ENCODE measurements at regions of chr1 and their contacts with region 1.

Region 1: GRCh38 chr1:152047730-152048402 is 11.1 kb upstream of the S100A11 start:
- DNase-seq: peak; percentile 94 to 96
- H3K4me3 ChIP-seq: peak overlapping the region; percentile 52; the same call in 1 of the 2 replicates
- H3K27ac ChIP-seq: peak overlapping the region; percentile 99
- H3K4me1 ChIP-seq: peaks cover 72% of the 10 kb centered on the region
- H3K27me3 ChIP-seq: no peaks in the 10 kb centered on the region
- CTCF ChIP-seq: peak; percentile 51; the same call in 1 of the 2 replicates

Region 2: GRCh38 chr1:151853411-151853943 is 194.4 kb before region 1 on chr1 and contains the start of gene THEM5:
- CTCF ChIA-PET with region 1: no interaction called
- POLR2A ChIA-PET with region 1: interaction called, 15 read pairs
- intact Hi-C with region 1: no loop called
- DNase-seq: no peak
- H3K4me3 ChIP-seq: no peak within 1 kb of the TSS
- H3K27ac ChIP-seq: no peak within 1 kb of the TSS
- H3K4me1 ChIP-seq: no peaks in the 10 kb centered on the region
- H3K27me3 ChIP-seq: no peaks in the 10 kb centered on the region
- CTCF ChIP-seq: no peak
- total RNA-seq, gene THEM5: not detected in 2 replicates

Region 3: GRCh38 chr1:151924679-151925587 is 122.9 kb before region 1 on chr1:
- CTCF ChIA-PET with region 1: no interaction called
- POLR2A ChIA-PET with region 1: no interaction called
- intact Hi-C with region 1: loop called (anchors 1 kb)
- DNase-seq: peak; percentile 34 to 90
- H3K4me3 ChIP-seq: no peak overlapping the region
- H3K27ac ChIP-seq: peak overlapping the region; percentile 47
- H3K4me1 ChIP-seq: peaks cover 51% of the 10 kb centered on the region
- H3K27me3 ChIP-seq: no peaks in the 10 kb centered on the region
- CTCF ChIP-seq: no peak

Region 4: GRCh38 chr1:151935154-151935553 is 112.7 kb before region 1 on chr1:
- CTCF ChIA-PET with region 1: no interaction called
- POLR2A ChIA-PET with region 1: no interaction called
- intact Hi-C with region 1: no loop called
- DNase-seq: no peak
- H3K4me3 ChIP-seq: no peak overlapping the region
- H3K27ac ChIP-seq: no peak overlapping the region
- H3K4me1 ChIP-seq: peaks cover 13% of the 10 kb centered on the region
- H3K27me3 ChIP-seq: no peaks in the 10 kb centered on the region
- CTCF ChIP-seq: no peak

Region 5: GRCh38 chr1:151993654-151994496 is 54.0 kb before region 1 on chr1 and contains the start of gene S100A10:
- CTCF ChIA-PET with region 1: interaction called, 3 read pairs
- POLR2A ChIA-PET with region 1: interaction called, 15 read pairs
- intact Hi-C with region 1: loop called (anchors 1 kb)
- DNase-seq: peak; percentile 92
- H3K4me3 ChIP-seq: peak within 1 kb of the TSS; percentile 94
- H3K27ac ChIP-seq: peak within 1 kb of the TSS; percentile 99
- H3K4me1 ChIP-seq: peaks cover 77% of the 10 kb centered on the region
- H3K27me3 ChIP-seq: no peaks in the 10 kb centered on the region
- CTCF ChIP-seq: no peak
- total RNA-seq, gene S100A10: 966 and 1,436 TPM in 2 replicates

Region 6: DNA sequence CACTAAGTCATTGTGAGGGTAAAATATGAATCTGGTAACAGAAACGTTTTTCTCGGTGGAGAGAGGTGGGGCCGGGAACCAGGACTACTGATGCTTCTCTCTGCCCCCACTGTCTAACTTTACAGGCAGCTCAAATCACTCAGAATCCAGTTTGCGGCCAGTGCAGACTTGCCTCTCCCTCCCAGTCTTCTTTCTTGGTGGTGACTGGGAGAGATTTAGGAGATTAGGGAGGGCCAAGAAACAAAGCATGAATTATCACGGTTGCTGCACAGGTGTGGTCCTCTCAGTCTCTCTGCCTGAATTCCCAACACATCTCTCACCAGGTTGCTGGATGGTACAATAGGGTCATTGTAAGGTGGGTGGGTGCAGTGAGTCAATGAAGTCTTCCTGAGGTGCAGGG is 23.7 kb before region 1 on chr1:
- CTCF ChIA-PET with region 1: interaction called, 3 read pairs
- POLR2A ChIA-PET with region 1: interaction called, 5 read pairs
- intact Hi-C with region 1: loop called (anchors 1 kb)
- DNase-seq: peak; percentile 73 to 96
- H3K4me3 ChIP-seq: peak overlapping the region; percentile 11; the same call in 1 of the 2 replicates
- H3K27ac ChIP-seq: peak overlapping the region; percentile 94
- H3K4me1 ChIP-seq: peaks cover 63% of the 10 kb centered on the region
- H3K27me3 ChIP-seq: no peaks in the 10 kb centered on the region
- CTCF ChIP-seq: no peak

Region 7: DNA sequence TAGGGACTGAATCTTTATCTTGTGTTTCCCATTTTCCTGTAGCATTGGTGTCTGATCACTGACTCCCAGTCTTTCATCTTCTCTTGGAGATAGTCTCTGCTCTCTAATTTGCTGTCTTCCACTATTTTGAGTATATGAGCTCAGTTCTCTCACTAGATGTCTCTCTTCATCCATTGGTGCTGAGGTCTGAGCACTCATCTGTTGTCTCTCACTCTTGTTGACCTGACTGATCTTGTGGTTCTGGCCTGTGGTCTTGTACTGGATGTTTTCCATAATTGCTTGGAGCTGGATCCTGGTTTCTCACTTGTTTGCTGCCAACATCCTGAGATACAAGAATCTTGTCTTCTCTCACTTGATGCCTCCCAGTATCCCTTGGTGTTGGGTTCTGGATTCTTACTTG is 14.1 kb after region 1 on chr1:
- CTCF ChIA-PET with region 1: no interaction called
- POLR2A ChIA-PET with region 1: no interaction called
- intact Hi-C with region 1: no loop called
- DNase-seq: no peak
- H3K4me3 ChIP-seq: no peak overlapping the region
- H3K27ac ChIP-seq: no peak overlapping the region
- H3K4me1 ChIP-seq: no peaks in the 10 kb centered on the region
- H3K27me3 ChIP-seq: peaks cover 41% of the 10 kb centered on the region
- CTCF ChIP-seq: no peak

Region 8: DNA sequence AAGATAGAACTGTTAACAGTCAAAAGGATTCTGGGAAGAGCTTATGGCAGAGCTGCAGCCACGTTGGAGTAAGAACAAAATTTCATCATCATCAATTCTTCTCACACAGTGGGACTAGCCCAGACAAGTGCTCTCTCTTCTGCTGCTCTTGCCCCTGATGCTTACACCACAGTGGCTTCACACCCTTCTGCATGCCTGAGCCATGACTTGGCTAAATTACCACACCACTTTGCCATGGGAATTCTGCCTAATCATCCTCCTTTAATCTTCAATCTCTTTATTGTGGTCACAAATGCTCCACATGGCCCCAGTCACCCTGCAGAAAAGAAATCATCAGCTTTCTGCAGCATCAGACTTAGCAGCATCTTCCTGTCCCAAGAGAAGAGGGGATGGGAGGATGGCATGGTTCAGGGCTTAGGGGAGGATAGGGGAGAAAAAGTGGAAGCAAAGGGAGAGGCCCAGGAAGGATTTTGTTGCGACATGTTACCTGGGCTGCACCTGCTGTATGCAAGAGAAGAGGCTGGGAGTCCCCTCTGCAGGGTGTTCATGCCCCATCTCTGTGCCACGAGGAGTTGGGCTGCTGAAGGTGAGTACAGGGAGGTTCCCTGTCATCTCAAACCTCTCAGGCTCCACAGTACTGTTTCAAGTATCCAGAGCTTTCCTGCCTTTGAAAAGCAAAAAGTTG is 120.1 kb after region 1 on chr1:
- CTCF ChIA-PET with region 1: no interaction called
- POLR2A ChIA-PET with region 1: interaction called, 8 read pairs
- intact Hi-C with region 1: loop called (anchors 2 kb)
- DNase-seq: peak; percentile 82 to 96
- H3K4me3 ChIP-seq: no peak overlapping the region
- H3K27ac ChIP-seq: peak overlapping the region; percentile 73
- H3K4me1 ChIP-seq: peaks cover 70% of the 10 kb centered on the region
- H3K27me3 ChIP-seq: no peaks in the 10 kb centered on the region
- CTCF ChIP-seq: no peak

Region 9: DNA sequence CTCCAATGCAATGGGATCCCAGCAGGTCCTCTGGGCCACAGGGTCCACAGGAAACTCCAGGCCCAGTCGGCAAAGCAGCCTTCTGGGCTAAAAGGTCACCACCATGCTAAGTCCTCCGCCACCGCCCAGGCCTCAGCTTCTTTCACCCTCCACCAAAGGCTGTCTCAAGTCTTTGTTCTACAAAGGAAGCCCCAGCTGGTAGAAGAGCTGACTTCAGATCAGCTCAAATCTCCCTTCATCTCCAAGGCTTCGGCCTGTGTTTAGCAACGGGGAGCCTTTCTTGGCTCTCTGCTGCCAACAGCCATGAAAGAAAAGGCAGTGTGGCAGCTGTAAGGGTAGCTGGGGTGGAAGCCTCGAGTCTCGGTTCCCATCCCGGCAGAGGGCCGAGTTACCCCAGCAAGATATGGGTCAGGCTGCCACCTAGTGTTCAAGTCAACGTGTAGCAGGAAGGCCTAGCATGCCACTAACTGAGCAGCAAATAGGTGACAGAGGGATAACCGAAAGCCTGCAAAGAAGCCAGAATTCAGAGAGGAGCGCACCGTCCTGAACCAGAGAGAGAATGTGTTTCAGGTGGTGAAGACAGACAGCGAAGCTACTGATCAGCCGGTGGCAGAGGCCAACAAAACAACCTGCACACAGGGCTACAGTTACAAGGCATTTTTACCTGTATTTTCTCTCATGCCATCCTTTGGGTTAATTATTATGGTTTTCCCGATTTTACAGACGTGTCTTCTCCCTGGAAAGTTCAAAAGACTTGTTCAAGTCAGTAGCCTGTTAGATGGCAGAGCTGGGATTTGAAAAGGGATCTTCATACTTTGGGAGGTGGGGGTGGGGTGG is 393.0 kb after region 1 on chr1:
- CTCF ChIA-PET with region 1: no interaction called
- POLR2A ChIA-PET with region 1: no interaction called
- intact Hi-C with region 1: loop called (anchors 2 kb)
- DNase-seq: peak in 1 of 2 experiments; percentile 55
- H3K4me3 ChIP-seq: no peak overlapping the region
- H3K27ac ChIP-seq: no peak overlapping the region
- H3K4me1 ChIP-seq: no peaks in the 10 kb centered on the region
- H3K27me3 ChIP-seq: peaks cover 30% of the 10 kb centered on the region
- CTCF ChIP-seq: peak; percentile 87

Measured in PC-9 (cell line).